HEK293 (cell line): ENCODE measurements at regions of chr4 and their contacts with region 1.

Region 1: DNA sequence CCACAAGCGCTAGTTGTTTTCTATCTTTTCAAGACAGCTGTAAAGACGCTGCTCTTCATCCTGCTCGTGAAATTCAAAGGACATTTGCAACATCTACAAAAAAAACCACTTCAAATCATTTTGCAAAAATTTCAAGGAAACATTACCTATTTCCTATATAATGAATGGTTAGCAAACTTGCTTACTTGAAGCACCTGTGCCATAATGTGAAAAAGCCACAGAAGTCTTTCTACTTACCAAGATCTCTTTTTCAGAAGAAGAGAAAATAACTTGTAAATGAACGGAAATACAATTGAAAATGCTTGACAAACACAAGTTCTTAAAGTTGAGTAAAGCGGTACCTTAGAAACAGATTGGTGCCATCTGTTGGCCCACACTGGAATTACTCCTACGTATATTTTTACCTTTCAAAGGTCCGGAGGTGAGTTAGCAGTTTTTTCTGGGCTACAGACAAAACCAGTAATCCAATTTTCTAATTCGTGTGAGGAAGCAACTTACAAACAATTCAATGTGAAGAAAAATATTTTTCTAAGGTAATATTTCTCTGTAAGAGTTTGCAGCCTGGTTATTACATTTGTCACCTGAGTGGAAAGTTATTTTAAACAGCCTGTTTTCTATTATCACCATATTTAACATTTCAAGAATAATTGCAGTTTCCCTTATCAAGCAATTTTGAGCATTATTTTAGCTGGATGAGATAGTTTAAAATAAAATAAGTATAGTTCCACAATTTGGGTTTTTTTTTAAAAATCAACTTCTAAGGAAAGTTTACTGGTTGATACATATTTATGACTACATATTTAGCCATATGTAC is at the start of gene TLR6:
- H3K4me3 ChIP-seq: no peak within 1 kb of the TSS
- H3K27ac ChIP-seq: no peak within 1 kb of the TSS
- H3K4me1 ChIP-seq: no peaks in the 10 kb centered on the region
- CTCF ChIP-seq: no peak

Region 2: DNA sequence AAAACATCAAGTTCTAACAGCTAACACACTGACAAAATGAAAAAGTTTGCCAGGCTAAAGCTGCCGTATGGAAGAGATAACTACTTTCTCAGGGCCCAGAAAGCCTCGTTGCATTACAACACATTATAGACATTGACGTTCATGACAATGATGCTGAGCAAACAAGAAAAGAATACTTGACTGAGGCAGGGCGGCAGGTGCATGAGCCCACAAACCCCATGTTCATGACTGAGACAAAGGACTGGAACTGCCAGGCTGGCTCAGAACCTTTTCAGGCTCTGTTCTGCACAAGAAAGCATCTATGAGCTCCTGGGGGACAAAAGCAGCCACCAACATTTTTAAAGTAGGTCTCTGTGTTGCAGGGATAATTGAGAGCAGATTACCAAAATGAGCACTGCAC is 13.7 kb before region 1 on chr4:
- CTCF ChIA-PET with region 1: interaction called, 21 read pairs
- POLR2A ChIA-PET with region 1: no interaction called
- H3K4me3 ChIP-seq: no peak overlapping the region
- H3K27ac ChIP-seq: no peak overlapping the region
- H3K4me1 ChIP-seq: no peaks in the 10 kb centered on the region
- CTCF ChIP-seq: no peak

Region 3: DNA sequence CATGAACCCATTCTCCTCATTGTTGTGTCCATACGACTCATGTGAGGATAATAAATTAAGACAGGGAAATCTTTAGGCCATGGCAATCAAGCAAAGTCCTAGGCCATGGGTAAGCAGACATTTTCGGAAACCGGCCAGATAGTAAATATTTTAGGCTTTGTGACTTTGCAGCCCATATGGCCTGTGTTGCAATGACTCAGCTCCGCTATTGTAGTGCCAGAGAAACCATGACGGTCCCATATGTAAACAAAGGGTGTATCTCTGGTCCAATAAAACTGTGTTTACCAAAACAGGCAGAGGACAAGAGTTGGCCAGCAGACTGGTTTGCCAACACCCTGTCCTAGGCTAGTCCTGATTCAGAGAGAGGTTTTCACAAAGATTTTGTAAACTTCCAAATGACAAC is 15.9 kb after region 1 on chr4:
- CTCF ChIA-PET with region 1: interaction called, 22 read pairs
- POLR2A ChIA-PET with region 1: no interaction called
- H3K4me3 ChIP-seq: no peak overlapping the region
- H3K27ac ChIP-seq: no peak overlapping the region
- H3K4me1 ChIP-seq: no peaks in the 10 kb centered on the region
- CTCF ChIP-seq: no peak